Natural killer cell (primary cell): ENCODE measurements at regions of chr15 and their contacts with region 1.

Region 1: DNA sequence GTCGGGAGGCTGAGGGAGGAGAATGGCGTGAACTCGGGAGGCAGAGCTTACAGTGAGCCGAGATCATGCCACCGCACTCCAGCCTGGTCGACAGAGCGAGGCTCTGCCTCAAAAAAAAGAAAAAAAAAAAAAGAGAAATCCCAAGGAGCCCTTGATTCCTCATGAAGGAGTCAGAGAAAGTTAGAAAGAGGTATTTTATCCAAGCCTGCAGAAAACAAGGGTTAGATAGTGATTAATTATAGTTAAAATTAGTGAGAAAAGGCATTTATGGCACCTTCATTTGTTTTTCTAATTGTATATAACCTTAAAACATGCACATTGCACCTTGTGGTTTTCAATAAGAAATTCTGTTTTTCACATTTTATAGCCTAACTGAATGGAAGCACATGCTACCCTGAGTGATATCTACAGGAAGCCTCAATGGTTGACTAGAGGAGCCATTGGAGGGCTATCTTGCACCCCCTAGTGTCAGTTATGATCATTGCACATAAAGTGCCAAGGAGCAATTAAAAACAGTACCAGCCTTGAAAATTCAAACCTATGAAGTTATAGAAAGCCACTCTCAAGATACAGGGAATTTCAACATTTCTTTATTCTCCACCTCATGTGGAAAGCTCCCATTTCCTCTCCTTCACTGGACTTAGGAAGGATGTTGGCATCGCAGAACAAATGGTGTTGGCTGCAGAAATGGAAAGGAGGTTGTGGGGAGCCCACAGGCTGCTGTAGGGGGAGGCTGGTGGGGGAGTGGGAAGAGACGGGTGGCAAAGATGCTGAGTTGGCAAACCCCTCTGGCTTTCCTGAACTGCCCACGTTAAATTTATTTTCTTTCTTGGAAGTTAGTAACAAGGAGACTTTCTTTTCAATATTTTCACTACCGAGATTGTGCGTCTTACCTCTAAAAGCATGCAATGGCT is 48.5 kb downstream of the ITGA11 start:
- DNase-seq: peak; percentile 9 to 73
- ATAC-seq: peak; percentile 67 to 86 (median 77)
- H3K4me3 ChIP-seq: no peak overlapping the region
- H3K4me3 Mint-ChIP-seq: no peak overlapping the region
- H3K27ac ChIP-seq: no peak overlapping the region
- H3K27ac Mint-ChIP-seq: no peak overlapping the region
- H3K4me1 ChIP-seq: no peaks in the 10 kb centered on the region
- H3K4me1 Mint-ChIP-seq: no peaks in the 10 kb centered on the region
- H3K27me3 ChIP-seq: no peaks in the 10 kb centered on the region
- H3K27me3 Mint-ChIP-seq: peaks cover 0 to 3% of the 10 kb centered on the region in 2 donors
- CTCF ChIP-seq: peak; percentile 72

Region 2: DNA sequence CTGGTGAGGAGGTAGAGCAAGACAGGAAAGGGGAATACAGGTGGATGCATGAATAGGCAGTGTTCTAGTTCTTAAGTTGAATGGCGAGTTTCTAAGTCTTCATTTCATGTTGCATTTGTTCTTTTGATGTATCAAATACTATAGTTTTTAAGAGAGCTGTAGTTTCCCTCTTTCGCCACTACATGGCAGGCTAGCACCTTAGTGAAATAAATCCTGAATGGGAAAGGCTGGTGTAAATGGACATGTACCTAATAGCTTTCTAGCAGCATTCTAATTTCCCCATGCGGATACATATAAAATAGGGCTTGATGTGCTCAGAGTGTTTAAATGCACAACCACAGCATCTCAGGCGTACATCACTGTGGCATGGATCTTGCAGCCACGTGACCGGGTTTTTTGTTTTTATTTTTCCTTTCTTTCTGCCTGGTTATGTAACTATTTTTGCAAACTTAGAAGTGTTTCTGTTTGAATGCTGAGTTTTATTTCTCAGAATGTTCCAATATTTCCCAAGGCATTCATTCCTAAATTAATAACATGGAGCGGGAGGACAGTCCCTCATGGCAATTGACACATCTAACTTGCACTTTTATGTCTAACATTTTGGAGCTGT is 130.4 kb before region 1 on chr15:
- intact Hi-C with region 1: loop called (anchors 1 kb)
- DNase-seq: peak in 1 of 2 donors; percentile 77
- ATAC-seq: peak; percentile 59 to 76 (median 68)
- H3K4me3 ChIP-seq: no peak overlapping the region
- H3K4me3 Mint-ChIP-seq: no peak overlapping the region
- H3K27ac ChIP-seq: no peak overlapping the region
- H3K27ac Mint-ChIP-seq: no peak overlapping the region
- H3K4me1 ChIP-seq: peaks cover 10% of the 10 kb centered on the region
- H3K4me1 Mint-ChIP-seq: peaks cover 0 to 5% of the 10 kb centered on the region in 2 donors
- H3K27me3 ChIP-seq: peaks cover 4% of the 10 kb centered on the region
- H3K27me3 Mint-ChIP-seq: peaks cover 21 to 27% of the 10 kb centered on the region in 2 donors
- CTCF ChIP-seq: peak; percentile 76

Region 3: GRCh38 chr15:68304589-68305337 is 78.7 kb before region 1 on chr15:
- intact Hi-C with region 1: loop called (anchors 1 kb)
- DNase-seq: no peak
- ATAC-seq: no peak
- H3K4me3 ChIP-seq: no peak overlapping the region
- H3K4me3 Mint-ChIP-seq: no peak overlapping the region
- H3K27ac ChIP-seq: no peak overlapping the region
- H3K27ac Mint-ChIP-seq: peak overlapping the region in 1 of 2 donors; percentile 7
- H3K4me1 ChIP-seq: peaks cover 5% of the 10 kb centered on the region
- H3K4me1 Mint-ChIP-seq: peaks cover 12 to 20% of the 10 kb centered on the region in 2 donors
- H3K27me3 ChIP-seq: no peaks in the 10 kb centered on the region
- H3K27me3 Mint-ChIP-seq: peaks cover 0 to 16% of the 10 kb centered on the region in 2 donors
- CTCF ChIP-seq: no peak